Breast epithelium (tissue), 4 donors: ENCODE measurements at regions of chr17 and their contacts with region 1.

Region 1: GRCh38 chr17:17206124-17206912 is at the start of gene PLD6:
- DNase-seq: peak; percentile 80 to 87
- H3K4me3 ChIP-seq: peak within 1 kb of the TSS; percentile 49 to 74 (median 58)
- H3K27ac ChIP-seq: peak within 1 kb of the TSS; percentile 93 to 95
- H3K4me1 ChIP-seq: peaks cover 8 to 19% of the 10 kb centered on the region in 2 donors
- H3K27me3 ChIP-seq: no peaks in the 10 kb centered on the region
- CTCF ChIP-seq: no peak
- POLR2A ChIP-seq: no peak
- total RNA-seq, gene PLD6: 2.9 to 4.0 (median 3.8) TPM

Region 2: DNA sequence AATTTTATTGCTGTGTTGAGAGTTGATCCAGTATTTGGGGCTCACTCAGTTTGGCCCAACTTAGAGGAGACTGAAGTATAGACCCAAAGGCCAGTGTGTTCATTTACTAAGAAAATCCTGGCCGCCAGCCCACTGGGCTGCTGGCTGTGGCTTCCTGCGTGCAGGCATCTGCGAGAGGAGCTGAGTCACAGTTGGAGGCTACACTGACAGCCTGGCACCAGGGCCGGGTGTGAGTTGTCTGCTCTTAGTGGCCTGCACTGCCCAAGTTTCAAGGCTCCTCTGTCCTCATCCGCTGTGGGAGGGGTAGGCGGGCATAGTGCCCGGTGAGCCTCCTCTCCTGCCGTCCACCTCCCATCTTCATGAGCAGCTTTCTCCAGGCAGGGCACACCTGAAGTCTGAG is 54.4 kb before region 1 on chr17:
- intact Hi-C with region 1: loop called (anchors 5 kb)
- DNase-seq: peak; percentile 67 to 79
- H3K4me3 ChIP-seq: no peak overlapping the region
- H3K27ac ChIP-seq: peak overlapping the region; percentile 29 to 30
- H3K4me1 ChIP-seq: no peaks in the 10 kb centered on the region
- H3K27me3 ChIP-seq: no peaks in the 10 kb centered on the region
- CTCF ChIP-seq: no peak
- POLR2A ChIP-seq: no peak

Region 3: GRCh38 chr17:17269926-17270773 is 63.8 kb after region 1 on chr17:
- intact Hi-C with region 1: no loop called
- DNase-seq: no peak
- H3K4me3 ChIP-seq: no peak overlapping the region
- H3K27ac ChIP-seq: no peak overlapping the region
- H3K4me1 ChIP-seq: no peaks in the 10 kb centered on the region
- H3K27me3 ChIP-seq: no peaks in the 10 kb centered on the region
- CTCF ChIP-seq: no peak
- POLR2A ChIP-seq: no peak